ENCODE measurements at regions of chr9 and their contacts with region 1.

Region 1: DNA sequence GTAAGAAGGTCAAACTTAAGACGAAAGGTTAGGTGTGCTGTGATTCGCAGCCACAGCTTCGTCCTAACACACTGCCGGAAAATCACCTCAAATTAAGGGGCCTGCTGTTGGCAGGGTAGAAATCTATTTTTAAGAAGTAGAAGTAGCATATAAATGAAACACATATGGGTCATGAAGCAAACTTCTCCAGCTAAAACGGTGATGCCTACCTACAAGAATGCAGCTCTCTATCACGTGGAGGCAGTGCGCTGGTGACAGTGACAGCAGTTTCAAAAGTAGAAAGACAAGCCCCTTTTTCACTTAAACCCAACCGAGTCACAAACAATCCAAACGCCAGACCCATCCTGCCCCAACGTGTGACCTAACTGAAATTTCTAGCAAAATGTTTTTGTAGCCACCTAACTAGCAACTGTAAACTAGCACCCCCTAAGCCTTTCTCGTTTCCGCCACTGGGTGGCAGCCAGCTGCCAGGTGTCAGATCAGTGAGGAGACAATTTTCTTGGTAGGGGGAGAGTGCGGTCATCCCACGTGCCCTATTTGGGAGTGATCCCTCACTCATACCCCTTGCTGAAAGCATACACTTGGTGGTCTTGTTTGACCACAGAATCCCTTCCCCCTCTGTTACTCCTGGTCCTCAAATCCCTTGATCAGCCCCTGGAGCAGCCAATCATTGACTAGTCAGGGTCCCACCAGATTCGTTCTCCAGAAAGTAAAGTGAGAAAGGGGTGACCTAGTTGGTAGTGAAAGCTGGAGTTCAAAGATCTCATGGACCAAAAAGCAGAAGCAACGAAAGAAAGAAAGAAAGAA is 71.8 kb upstream of the MAMDC2 start:
- DNase-seq: peak; percentile 36
- ATAC-seq: peak; percentile 84
- H3K4me3 ChIP-seq: no peak overlapping the region
- H3K27ac ChIP-seq: no peak overlapping the region
- H3K4me1 ChIP-seq: peaks cover 6 to 21% of the 10 kb centered on the region in 2 experiments
- H3K27me3 ChIP-seq: no peaks in the 10 kb centered on the region
- CTCF ChIP-seq: peak; percentile 91 to 95 (median 94)
- POLR2A ChIP-seq: no peak
- RAD21 ChIP-seq: peak; percentile 96

Region 2: DNA sequence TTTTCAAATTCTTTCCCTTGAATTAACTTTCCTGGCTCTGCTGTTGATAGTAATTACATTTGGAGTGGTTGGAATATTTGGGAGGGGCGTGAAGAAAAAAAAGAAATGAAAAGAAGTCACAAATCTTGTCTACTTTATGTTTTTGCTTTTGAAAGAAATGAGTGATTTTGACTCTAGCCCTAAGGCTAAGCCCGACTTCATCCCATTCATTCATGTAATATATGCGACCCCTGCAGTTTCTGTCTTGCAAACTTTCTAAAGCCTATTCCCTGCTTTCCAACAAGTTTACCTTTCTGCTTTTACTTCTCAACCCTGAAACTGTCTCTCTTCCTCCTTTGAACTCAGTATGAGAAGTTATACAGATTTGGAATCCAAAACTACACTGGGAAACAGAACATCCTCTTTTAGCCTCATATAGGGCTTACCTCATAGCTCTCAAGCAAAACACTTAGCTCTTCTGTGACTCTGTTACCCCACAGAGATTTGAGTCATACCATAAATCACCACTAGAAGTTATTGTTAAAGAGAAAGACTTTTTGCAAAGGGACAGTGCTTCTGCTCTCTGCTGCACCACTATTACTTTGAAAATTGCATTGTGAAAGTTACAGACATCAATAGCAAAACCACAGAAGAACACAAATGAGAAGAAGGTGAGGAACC is 149.6 kb before region 1 on chr9:
- CTCF ChIA-PET with region 1: no interaction called
- POLR2A ChIA-PET with region 1: no interaction called
- RAD21 ChIA-PET with region 1: no interaction called
- intact Hi-C with region 1: no loop called
- DNase-seq: no peak
- ATAC-seq: no peak
- H3K4me3 ChIP-seq: no peak overlapping the region
- H3K27ac ChIP-seq: no peak overlapping the region
- H3K4me1 ChIP-seq: no peaks in the 10 kb centered on the region
- H3K27me3 ChIP-seq: no peaks in the 10 kb centered on the region
- CTCF ChIP-seq: no peak
- POLR2A ChIP-seq: no peak
- RAD21 ChIP-seq: 0 out of 2 replicates have a peak, but pooled peaks have one; percentile 8

Region 3: DNA sequence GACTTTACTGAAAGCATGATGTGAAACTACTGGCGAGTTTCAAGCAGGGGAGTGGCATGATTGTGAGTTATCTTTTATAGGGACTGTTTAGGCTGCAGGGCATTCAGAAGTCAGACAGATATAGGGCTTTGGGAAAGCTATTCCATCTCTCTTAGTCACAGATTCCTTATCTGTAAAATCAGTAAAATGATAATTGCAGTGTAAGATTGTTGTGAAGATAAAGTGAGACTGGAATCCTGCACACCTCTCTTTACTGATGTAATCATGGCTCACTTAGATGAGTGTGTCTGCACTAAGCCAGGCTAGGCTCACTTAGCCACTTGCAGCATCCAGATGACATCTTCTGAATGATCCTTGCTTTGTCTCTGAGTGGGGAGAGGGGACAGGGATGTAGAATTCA is 10.0 kb before region 1 on chr9:
- CTCF ChIA-PET with region 1: interaction called, 12 read pairs
- POLR2A ChIA-PET with region 1: no interaction called
- RAD21 ChIA-PET with region 1: no interaction called
- intact Hi-C with region 1: no loop called
- DNase-seq: no peak
- ATAC-seq: no peak
- H3K4me3 ChIP-seq: no peak overlapping the region
- H3K27ac ChIP-seq: no peak overlapping the region
- H3K4me1 ChIP-seq: no peaks in the 10 kb centered on the region
- H3K27me3 ChIP-seq: no peaks in the 10 kb centered on the region
- CTCF ChIP-seq: no peak
- POLR2A ChIP-seq: no peak
- RAD21 ChIP-seq: no peak

Region 4: DNA sequence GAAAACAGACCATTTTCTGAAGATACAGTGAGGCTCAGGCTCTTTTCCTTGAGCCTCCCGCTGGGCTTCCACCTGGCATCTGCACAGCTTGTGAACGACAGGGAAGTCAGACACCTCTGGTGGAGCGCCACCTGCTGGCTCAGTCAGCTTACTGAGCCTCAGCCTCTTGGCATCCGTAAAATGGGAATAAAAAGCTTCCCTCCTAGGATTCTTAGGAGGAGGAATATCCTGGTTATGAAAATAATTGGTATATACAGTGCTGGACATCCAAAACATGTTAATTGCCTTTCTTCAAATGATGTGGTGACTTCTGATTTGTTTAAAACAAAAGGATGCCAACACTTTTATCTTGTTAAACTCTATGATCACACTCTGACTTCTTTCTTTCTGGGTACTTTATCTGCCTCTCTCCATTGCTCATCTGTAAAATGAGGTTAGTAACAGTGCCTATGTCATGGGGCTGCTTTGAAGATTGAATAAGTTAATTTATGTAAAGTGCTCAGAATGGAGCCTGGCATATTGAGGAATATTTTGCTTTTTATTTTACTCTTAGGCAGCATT is 139.3 kb after region 1 on chr9:
- CTCF ChIA-PET with region 1: interaction called, 205 read pairs
- POLR2A ChIA-PET with region 1: interaction called, 5 read pairs
- RAD21 ChIA-PET with region 1: interaction called, 12 to 19 read pairs
- intact Hi-C with region 1: loop called (anchors 1 kb)
- DNase-seq: peak; percentile 66
- ATAC-seq: peak; percentile 82
- H3K4me3 ChIP-seq: no peak overlapping the region
- H3K27ac ChIP-seq: no peak overlapping the region
- H3K4me1 ChIP-seq: peaks cover 4 to 32% of the 10 kb centered on the region in 2 experiments; a peak in 3 of 4 replicates
- H3K27me3 ChIP-seq: no peaks in the 10 kb centered on the region
- CTCF ChIP-seq: peak; percentile 85 to 94 (median 93)
- POLR2A ChIP-seq: no peak
- RAD21 ChIP-seq: peak; percentile 88

Region 5: GRCh38 chr9:70229579-70229978 is 257.7 kb after region 1 on chr9:
- CTCF ChIA-PET with region 1: interaction called, 8 read pairs
- POLR2A ChIA-PET with region 1: no interaction called
- RAD21 ChIA-PET with region 1: interaction called in 1 of 2 experiments, 4 read pairs
- intact Hi-C with region 1: loop called (anchors 1 kb)
- DNase-seq: peak; percentile 18
- ATAC-seq: peak; percentile 42; the same call in 1 of the 2 replicates
- H3K4me3 ChIP-seq: no peak overlapping the region
- H3K27ac ChIP-seq: no peak overlapping the region
- H3K4me1 ChIP-seq: no peaks in the 10 kb centered on the region
- H3K27me3 ChIP-seq: no peaks in the 10 kb centered on the region
- CTCF ChIP-seq: peak in 2 of 3 experiments; percentile 44 to 55; a peak in 3 of 6 replicates
- POLR2A ChIP-seq: no peak
- RAD21 ChIP-seq: peak; percentile 72

Region 6: DNA sequence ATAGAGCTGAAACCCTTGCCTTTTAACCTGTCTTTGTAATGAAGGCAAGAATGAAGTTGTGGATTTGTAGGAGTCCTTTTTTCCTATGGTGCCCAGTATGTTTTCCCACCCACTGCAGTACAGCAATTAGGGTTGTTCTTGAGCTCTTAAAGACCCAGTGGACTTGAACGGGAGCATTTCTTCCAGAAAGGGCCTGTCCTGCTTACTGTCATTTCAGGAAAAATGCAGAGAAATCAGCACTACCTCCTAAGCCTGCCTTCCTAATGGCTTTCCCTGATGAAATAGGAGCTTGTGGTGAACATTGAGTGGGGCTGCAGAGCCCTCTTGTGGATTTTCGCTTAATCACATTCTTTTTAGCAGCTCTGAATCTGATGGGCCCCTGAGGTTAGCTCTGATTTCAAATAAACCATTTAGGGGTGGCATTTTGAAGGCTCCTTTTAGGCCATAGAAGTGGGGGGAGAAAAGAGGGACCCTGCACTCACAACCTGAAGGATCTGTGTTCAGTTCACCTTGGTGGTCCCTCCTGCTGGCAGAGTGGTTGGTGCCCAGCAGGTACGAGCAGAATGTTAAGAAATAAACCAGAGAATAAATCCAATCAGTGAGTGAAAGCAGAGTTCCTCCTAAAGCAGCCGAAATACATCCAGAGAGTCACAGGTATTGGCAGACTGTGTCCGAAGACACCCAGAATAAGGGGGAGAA is 630.6 kb after region 1 on chr9:
- CTCF ChIA-PET with region 1: interaction called, 7 read pairs
- POLR2A ChIA-PET with region 1: no interaction called
- RAD21 ChIA-PET with region 1: interaction called in 1 of 2 experiments, 3 read pairs
- intact Hi-C with region 1: loop called (anchors 1 kb)
- DNase-seq: peak; percentile 65
- ATAC-seq: peak; percentile 98
- H3K4me3 ChIP-seq: no peak overlapping the region
- H3K27ac ChIP-seq: no peak overlapping the region
- H3K4me1 ChIP-seq: no peaks in the 10 kb centered on the region
- H3K27me3 ChIP-seq: no peaks in the 10 kb centered on the region
- CTCF ChIP-seq: peak; percentile 62 to 83 (median 73); a peak in 5 of 6 replicates
- POLR2A ChIP-seq: no peak
- RAD21 ChIP-seq: peak; percentile 92